Dorsolateral prefrontal cortex (tissue), 120 donors: ENCODE measurements at regions of chr6 and their contacts with region 1.

Region 1: GRCh38 chr6:13908955-13909381 is 15.8 kb upstream of the RNF182 start:
- DNase-seq: peak in 5 of 10 donors; percentile 25 to 59 (median 39)
- H3K4me3 ChIP-seq: no peak overlapping the region
- H3K27ac ChIP-seq: no peak overlapping the region
- H3K27me3 ChIP-seq: peaks cover 0 to 17% (median 0%) of the 10 kb centered on the region in 45 donors
- CTCF ChIP-seq: peak; percentile 38 to 91 (median 78)

Region 2: GRCh38 chr6:12504319-12504966 is 1404.5 kb before region 1 on chr6:
- intact Hi-C with region 1: no loop called
- DNase-seq: no peak
- H3K4me3 ChIP-seq: no peak overlapping the region
- H3K27ac ChIP-seq: no peak overlapping the region
- H3K27me3 ChIP-seq: no peaks in the 10 kb centered on the region
- CTCF ChIP-seq: peak in 4 of 56 donors; percentile 7 to 18 (median 16)

Region 3: GRCh38 chr6:13554929-13555333 is 354.0 kb before region 1 on chr6:
- intact Hi-C with region 1: no loop called
- DNase-seq: peak in 9 of 10 donors; percentile 27 to 82 (median 62)
- H3K4me3 ChIP-seq: peak overlapping the region in 29 of 59 donors; percentile 0 to 42 (median 18)
- H3K27ac ChIP-seq: peak overlapping the region; percentile 58 to 95 (median 84)
- H3K27me3 ChIP-seq: no peaks in the 10 kb centered on the region
- CTCF ChIP-seq: peak in 9 of 56 donors; percentile 4 to 25 (median 15)

Region 4: DNA sequence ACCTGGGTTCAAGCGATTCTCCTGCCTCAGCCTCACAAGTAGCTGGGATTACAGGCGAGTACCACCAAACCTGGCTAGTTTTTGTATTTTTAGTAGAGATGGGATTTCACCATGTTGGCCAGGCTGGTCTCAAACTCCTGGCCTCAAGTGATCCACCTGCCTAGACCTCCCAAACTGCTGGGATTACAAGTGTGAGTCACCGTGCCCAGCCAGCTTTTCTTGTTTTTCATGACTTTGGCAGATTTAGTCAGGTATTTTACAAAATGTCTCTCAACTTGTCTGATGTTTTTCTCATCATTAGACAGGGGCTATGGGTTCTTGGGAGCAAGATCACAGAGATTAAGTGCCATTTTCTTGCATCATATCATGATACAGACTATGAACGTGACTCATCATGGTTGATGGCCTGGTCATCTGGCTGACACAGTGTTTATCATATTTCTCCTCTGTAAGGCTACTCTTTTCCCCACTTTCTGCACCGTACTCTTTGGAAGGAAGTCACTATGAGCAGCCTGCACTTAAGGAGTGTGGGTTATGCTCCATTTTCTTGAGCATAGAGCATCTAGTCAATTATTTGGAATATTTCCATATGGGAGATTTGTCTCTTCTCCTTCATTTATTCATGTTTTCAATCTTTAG is 83.6 kb after region 1 on chr6:
- intact Hi-C with region 1: no loop called
- DNase-seq: no peak
- H3K4me3 ChIP-seq: no peak overlapping the region
- H3K27ac ChIP-seq: no peak overlapping the region
- H3K27me3 ChIP-seq: peaks cover 0 to 8% (median 0%) of the 10 kb centered on the region in 45 donors
- CTCF ChIP-seq: no peak

Region 5: GRCh38 chr6:14046476-14047068 is 137.6 kb after region 1 on chr6:
- intact Hi-C with region 1: loop called in 1 of 2 experiments (anchors 5 kb)
- DNase-seq: peak in 1 of 10 donors; percentile 36
- H3K4me3 ChIP-seq: no peak overlapping the region
- H3K27ac ChIP-seq: no peak overlapping the region
- H3K27me3 ChIP-seq: peaks cover 0 to 49% (median 0%) of the 10 kb centered on the region in 45 donors
- CTCF ChIP-seq: peak in 55 of 56 donors; percentile 23 to 66 (median 50)

Region 6: DNA sequence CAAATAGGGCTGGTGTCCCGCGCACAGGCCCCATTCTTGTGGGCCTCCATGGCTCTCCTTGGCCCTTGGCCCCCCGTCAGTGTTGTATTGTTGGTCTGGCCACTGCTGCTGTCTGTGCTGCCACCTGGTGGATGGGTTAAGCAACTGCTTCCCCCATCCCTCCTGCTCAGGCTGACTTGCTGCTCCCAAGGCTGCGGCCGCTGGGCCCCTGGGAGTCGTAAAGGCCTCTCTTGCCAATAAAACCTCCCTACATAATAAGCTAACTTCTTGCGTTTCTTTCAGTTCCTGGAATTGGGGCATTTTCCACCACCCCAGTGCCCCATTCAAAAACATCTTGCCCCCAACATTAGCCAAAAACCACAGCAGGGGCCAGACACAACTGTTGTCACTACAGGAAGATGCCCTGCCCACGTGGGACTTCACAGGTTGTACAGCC is 235.7 kb after region 1 on chr6:
- intact Hi-C with region 1: loop called (anchors 2 to 10 kb)
- DNase-seq: peak in 7 of 10 donors; percentile 26 to 72 (median 50)
- H3K4me3 ChIP-seq: no peak overlapping the region
- H3K27ac ChIP-seq: no peak overlapping the region
- H3K27me3 ChIP-seq: no peaks in the 10 kb centered on the region
- CTCF ChIP-seq: peak; percentile 62 to 96 (median 88)